ENCODE measurements at regions of chr10 and their contacts with region 1.

Region 1: DNA sequence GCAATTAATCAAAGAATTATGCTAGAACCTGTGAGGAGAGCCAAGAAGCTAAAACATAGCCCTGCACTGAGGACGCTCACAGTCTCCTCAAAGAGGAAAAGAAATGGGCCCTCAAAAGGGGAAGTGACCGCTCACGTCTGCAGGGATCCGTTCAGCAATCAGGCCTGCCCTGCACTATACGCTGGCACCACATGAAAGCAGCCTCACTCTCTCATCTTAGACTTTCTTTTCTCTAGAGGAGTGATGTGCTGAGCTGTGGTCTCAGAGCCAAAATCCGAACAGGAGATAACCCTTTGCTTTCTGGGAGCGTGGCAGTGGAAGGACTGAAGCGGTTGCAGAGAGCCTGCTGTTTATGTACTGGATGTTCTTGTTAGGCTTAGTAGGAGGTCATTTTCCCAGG is 6.3 kb upstream of the IL2RA start:
- DNase-seq: peak in 7 of 9 donors; percentile 65 to 76 (median 69)
- ATAC-seq: peak; percentile 85
- H3K4me3 ChIP-seq: peak overlapping the region; percentile 46
- H3K4me3 Mint-ChIP-seq: peak overlapping the region; percentile 76 to 91 (median 82)
- H3K27ac ChIP-seq: peak overlapping the region; percentile 62
- H3K27ac Mint-ChIP-seq: peak overlapping the region; percentile 16 to 94 (median 90)
- H3K4me1 ChIP-seq: peaks cover 0 to 55% of the 10 kb centered on the region in 2 donors
- H3K4me1 Mint-ChIP-seq: peaks cover 52 to 94% (median 82%) of the 10 kb centered on the region in 7 donors
- H3K27me3 ChIP-seq: no peaks in the 10 kb centered on the region
- H3K27me3 Mint-ChIP-seq: no peaks in the 10 kb centered on the region

Region 2: DNA sequence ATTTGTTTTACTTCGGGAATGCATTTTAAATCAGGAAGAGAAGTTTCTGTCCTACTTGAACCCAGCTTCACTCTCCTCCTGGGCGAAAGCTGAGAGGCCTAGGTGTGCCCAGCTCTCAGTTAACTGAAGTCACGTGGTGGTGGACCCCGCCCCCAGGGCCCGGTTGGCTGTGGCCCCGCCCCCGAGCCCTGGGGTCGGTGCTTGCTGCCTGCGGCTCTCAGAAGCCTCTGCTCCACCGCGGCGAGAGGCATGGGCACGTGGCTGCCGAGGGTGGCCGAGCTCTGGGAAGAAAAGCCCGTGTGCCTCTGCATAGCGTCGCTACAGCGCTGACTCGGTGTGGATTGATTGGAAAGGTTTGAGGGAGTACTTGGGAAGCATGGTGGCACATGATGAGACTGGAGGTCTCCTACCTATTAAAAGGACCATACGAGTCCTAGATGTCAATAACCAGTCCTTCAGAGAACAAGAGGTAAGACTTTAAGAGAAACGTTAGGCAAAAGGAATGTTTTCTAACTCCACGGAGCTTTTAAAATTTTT is 622.0 kb before region 1 on chr10:
- CTCF ChIA-PET with region 1: no interaction called
- POLR2A ChIA-PET with region 1: no interaction called
- intact Hi-C with region 1: no loop called
- DNase-seq: peak; percentile 77 to 88 (median 86)
- ATAC-seq: peak; percentile 93
- H3K4me3 ChIP-seq: peak overlapping the region; percentile 79
- H3K4me3 Mint-ChIP-seq: peak overlapping the region; percentile 92 to 100 (median 96)
- H3K27ac ChIP-seq: peak overlapping the region; percentile 78
- H3K27ac Mint-ChIP-seq: peak overlapping the region; percentile 82 to 97 (median 92)
- H3K4me1 ChIP-seq: peaks cover 0 to 24% of the 10 kb centered on the region in 2 donors
- H3K4me1 Mint-ChIP-seq: peaks cover 16 to 78% (median 62%) of the 10 kb centered on the region in 7 donors
- H3K27me3 ChIP-seq: no peaks in the 10 kb centered on the region
- H3K27me3 Mint-ChIP-seq: no peaks in the 10 kb centered on the region

Region 3: DNA sequence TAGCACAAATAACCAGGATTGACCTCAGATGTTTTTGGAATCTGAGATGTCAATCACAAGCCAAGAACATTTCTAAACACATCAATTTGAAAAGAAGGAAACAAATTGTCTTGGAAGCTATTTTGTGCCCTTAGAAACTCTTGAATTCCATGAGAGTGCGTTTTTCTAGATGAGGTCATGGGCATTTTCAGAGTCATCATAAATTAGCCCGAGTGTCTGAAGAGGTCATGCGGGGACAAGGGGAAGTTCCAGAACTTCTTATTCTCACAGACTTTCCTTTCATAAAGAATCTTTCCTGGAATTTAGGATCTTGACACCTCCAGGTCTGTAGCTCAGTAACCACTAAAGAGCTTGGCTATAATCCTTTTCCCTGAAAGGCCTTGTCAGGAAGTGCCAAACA is 34.5 kb before region 1 on chr10:
- CTCF ChIA-PET with region 1: interaction called, 5 read pairs
- POLR2A ChIA-PET with region 1: interaction called, 7 read pairs
- intact Hi-C with region 1: loop called in 1 of 2 experiments (anchors 1 kb)
- DNase-seq: no peak
- ATAC-seq: no peak
- H3K4me3 ChIP-seq: no peak overlapping the region
- H3K4me3 Mint-ChIP-seq: no peak overlapping the region
- H3K27ac ChIP-seq: no peak overlapping the region
- H3K27ac Mint-ChIP-seq: peak overlapping the region in 2 of 9 donors; percentile 34 to 48
- H3K4me1 ChIP-seq: peaks cover 26 to 32% of the 10 kb centered on the region in 2 donors
- H3K4me1 Mint-ChIP-seq: peaks cover 29 to 60% (median 40%) of the 10 kb centered on the region in 7 donors
- H3K27me3 ChIP-seq: no peaks in the 10 kb centered on the region
- H3K27me3 Mint-ChIP-seq: no peaks in the 10 kb centered on the region

Region 4: DNA sequence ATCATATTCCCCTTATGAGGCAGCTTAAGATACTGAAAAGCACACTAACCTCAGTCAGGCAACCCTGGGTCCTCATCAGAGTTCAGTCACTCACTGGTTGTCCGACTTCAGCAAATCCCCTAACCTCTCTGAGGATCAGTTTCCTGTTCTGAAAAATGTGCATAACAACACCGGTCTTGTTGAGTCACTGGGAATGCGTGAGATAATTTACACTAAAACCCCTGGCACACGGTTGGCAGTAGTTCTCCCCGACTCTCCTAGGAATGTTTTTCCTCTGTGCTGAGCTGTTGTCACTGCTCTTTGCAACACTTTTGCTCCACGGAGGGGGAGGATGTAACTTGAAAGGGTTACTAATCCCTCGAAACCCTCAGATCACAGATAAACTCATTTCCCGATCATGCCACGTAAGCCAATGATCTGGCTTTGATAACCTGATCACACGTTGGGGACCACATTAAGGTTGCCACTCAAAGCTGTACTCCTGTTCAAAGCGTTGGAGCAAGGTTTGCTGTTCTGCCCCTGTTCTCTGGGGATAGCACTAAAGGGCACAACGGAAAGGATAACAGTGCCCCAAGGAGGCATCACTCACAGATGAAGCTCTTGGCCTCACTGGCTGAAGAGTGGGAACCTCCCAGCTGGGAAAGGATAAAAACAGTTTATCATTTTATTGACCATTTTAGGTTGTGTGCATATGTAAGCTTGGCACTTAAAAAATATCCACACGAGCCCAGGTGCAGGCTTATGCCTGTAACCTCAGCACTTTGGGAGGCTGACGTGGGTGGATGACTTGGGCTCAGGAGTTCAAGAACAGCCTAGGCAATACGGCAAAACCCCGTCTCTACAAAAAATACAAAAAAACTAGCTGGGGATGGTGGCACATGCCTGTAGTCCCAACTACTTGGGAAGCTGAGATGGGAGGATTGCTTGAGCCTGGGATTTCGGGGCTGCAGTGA is 15.4 kb after region 1 on chr10:
- CTCF ChIA-PET with region 1: interaction called, 59 read pairs
- POLR2A ChIA-PET with region 1: interaction called, 52 read pairs
- intact Hi-C with region 1: loop called (anchors 1 kb)
- DNase-seq: peak in 8 of 9 donors; percentile 45 to 71 (median 62)
- ATAC-seq: peak; percentile 36
- H3K4me3 ChIP-seq: peak overlapping the region; percentile 0
- H3K4me3 Mint-ChIP-seq: peak overlapping the region; percentile 51 to 90 (median 73)
- H3K27ac ChIP-seq: no peak overlapping the region
- H3K27ac Mint-ChIP-seq: peak overlapping the region; percentile 9 to 92 (median 80)
- H3K4me1 ChIP-seq: peaks cover 17 to 37% of the 10 kb centered on the region in 2 donors
- H3K4me1 Mint-ChIP-seq: peaks cover 30 to 67% (median 56%) of the 10 kb centered on the region in 7 donors
- H3K27me3 ChIP-seq: no peaks in the 10 kb centered on the region
- H3K27me3 Mint-ChIP-seq: no peaks in the 10 kb centered on the region

Measured in naive thymus-derived CD4-positive, alpha-beta T cell (primary cell).